Head of caudate nucleus (tissue), 42 donors: ENCODE measurements at regions of chr9 and their contacts with region 1.

Region 1: GRCh38 chr9:100352727-100353505 is at the start of gene TEX10:
- DNase-seq: peak; percentile 64 to 95 (median 88)

Region 2: GRCh38 chr9:100394816-100395215 is 41.9 kb after region 1 on chr9:
- intact Hi-C with region 1: no loop called
- DNase-seq: no peak

Region 3: DNA sequence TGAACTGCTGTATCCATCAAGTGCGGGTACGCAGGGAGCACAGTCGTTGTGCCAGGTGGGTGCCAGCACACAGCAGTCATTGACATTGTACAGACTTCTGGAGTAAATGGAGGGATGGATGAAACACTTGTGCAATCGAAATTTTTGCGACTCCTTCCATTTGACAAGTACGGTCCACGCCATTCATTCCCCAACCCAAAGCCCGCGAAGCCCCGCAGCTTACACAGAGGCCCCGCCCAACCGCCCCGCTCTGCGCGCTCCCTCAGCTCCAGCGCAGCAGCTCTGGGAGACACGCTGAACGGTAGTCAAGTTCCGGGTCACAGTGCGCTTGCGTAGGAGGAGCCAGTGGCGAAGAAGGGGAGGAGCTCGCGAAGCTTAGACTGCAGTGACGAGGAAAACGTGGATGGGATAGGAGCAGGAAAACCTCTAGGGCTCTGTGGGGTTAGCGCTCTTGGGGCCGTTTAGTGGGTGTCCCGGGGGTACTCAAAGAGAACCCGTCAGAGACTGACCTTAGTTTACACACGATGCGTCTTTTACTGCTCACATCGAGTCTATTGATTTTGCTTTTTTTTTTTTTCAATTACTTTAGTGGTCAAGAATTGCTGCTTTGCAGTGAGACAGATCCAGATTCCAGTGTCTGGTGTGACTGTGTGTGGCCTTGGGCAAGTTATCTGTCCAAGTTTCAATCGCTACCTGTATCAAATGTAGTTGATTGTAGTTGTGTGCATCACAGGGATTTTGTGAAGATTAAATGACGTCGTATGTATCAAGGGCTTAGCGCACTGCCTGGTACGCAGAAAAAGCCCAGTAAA is 58.8 kb after region 1 on chr9:
- intact Hi-C with region 1: loop called (anchors 5 kb)
- DNase-seq: peak; percentile 91 to 97 (median 95)

Region 4: GRCh38 chr9:100426530-100427428 is 73.9 kb after region 1 on chr9 and contains the start of gene MSANTD3:
- intact Hi-C with region 1: loop called (anchors 5 kb)
- DNase-seq: peak in 40 of 42 donors; percentile 20 to 86 (median 64)